Ascending aorta (tissue), 2 donors: ENCODE measurements at regions of chr6 and their contacts with region 1.

Region 1: DNA sequence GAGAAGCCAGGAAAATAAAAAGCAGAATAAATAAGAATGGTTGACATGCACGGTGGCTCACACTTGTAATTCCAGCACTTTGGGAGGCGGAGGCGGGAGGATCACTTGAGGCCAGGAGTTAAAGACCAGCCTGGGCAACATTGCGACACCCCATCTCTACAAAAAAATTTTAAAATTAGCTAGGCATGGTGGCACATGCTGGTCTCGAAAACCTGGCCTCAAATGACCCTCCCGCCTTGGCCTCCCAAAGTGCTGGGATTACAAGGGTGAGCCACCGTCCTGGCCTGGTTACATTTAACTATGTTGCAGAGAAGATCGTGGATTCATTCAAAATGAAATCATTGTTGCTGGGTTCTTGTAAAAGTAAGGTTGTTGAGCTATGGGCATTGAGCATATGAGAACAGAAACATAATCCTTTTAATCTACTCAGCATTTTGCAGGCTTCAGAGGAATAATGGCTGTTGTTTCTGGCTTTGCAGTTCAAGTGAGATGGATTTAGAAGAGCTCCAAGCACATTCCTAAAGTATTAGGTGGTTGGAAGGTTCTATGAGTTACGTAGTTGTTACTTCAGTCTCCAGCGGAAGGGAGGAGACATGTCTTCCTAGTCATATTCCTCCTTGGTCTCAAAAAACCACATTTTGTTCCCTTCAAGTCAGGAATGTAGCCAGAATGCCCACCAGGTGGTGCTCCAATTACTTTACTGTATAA is 45.6 kb upstream of the RAB23 start:
- DNase-seq: peak in 1 of 2 donors; percentile 90
- H3K4me3 ChIP-seq: no peak overlapping the region
- H3K27ac ChIP-seq: peak overlapping the region; percentile 48 to 60
- H3K4me1 ChIP-seq: peaks cover 11 to 30% of the 10 kb centered on the region in 2 donors
- H3K27me3 ChIP-seq: no peaks in the 10 kb centered on the region
- CTCF ChIP-seq: peak; percentile 35 to 56 (median 52)

Region 2: GRCh38 chr6:56683882-56684281 is 583.9 kb before region 1 on chr6:
- intact Hi-C with region 1: no loop called
- DNase-seq: peak in 1 of 2 donors; percentile 88
- H3K4me3 ChIP-seq: no peak overlapping the region
- H3K27ac ChIP-seq: peak overlapping the region; percentile 66 to 81
- H3K4me1 ChIP-seq: peaks cover 0 to 25% of the 10 kb centered on the region in 2 donors
- H3K27me3 ChIP-seq: no peaks in the 10 kb centered on the region
- CTCF ChIP-seq: no peak

Region 3: DNA sequence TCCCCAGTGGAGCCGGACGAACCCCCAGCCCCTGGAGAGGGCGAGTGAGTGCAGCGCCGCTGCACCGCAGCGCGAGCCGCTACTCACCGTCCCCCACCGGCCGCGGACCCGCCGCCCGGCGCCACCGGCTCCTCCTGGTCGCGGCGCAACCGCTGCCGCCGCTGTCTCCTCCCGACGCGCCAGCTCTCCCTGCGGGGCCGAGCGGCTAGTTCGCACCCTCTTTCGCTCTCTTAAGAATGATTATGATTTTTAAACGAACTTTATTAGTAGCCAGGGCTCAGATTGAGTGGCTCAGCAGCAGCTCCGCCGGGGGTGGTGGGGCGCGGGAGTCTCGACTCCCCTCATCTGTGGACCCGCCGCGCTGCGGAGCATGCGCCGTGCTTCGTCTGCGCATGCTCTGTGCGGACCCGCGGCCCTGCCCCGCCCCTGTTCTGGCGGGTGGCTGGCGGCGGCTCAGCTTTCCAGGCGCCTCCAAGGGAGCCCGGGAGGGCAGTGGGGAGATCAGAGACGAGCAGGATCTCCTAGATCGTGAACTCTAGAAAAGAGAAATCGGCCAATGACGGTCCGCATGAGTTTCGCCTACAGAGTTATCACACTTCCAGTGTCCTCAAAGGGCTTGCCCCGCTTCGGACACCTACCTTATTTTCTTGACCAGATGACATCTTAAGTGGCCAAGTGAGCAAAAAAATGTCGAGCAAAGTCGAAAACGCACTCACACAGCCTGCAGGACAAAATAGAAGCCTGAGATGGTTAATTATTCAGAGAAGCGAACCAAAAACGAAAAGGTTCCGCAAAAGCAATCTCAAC is 45.6 kb before region 1 on chr6 and contains the start of gene RAB23:
- intact Hi-C with region 1: loop called (anchors 2 kb)
- DNase-seq: peak; percentile 16 to 89
- H3K4me3 ChIP-seq: peak within 1 kb of the TSS; percentile 72 to 88
- H3K27ac ChIP-seq: peak within 1 kb of the TSS; percentile 93 to 96
- H3K4me1 ChIP-seq: peaks cover 0 to 6% of the 10 kb centered on the region in 2 donors
- H3K27me3 ChIP-seq: no peaks in the 10 kb centered on the region
- CTCF ChIP-seq: no peak
- total RNA-seq, gene RAB23: 19.9 TPM